ENCODE measurements at regions of chr13 and their contacts with region 1.

Region 1: DNA sequence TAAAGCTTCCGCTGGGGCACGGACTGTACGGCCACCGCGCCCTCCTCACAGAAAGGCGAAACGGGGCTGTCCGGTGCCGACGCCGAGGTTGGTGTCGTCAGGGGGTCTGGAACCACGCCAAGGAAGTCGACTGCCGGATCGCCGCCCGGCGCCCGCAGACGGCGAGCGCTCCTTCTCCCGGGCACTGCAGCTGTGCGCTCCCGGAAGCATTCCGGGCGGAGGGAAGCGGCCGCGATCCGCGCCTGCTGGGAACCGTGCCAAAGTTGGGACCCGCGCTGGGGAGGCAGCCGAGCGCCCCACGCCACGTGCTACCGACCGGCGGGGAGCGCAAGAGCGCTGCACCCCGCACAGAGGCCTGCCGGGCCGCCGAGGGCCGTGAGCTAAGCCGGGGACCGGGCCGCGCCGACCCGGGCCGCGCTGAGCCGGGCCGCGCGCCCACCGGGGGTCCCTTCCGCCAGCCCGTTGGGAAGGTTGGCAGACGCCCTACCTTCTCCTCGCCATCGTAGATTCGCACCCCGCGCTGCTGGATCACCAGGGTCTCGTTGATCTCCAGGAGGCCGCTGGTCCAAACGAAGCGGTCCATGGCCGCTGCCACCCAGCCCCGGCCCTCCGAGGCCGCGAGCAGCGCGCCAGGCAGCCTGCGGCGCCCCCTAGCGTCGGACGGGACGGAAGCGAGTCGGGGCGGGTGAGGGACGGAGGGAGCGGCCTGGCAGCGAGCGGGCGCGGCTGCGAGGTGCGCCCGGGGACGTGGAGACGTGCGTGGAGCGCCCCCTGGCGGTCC is at the start of gene VPS36:
- DNase-seq: peak; percentile 96 to 98
- ATAC-seq: peak; percentile 86 to 97 (median 92)
- H3K4me3 ChIP-seq: peak within 1 kb of the TSS; percentile 62 to 88 (median 80)
- H3K27ac ChIP-seq: peak within 1 kb of the TSS; percentile 89 to 99 (median 97)
- H3K4me1 ChIP-seq: peaks cover 0 to 44% (median 26%) of the 10 kb centered on the region in 9 donors
- H3K27me3 ChIP-seq: no peaks in the 10 kb centered on the region
- CTCF ChIP-seq: peak; percentile 99 to 100 (median 100)
- total RNA-seq, gene VPS36: 25.3 to 36.5 (median 32.7) TPM

Region 2: GRCh38 chr13:51935326-51936201 is 514.6 kb before region 1 on chr13:
- intact Hi-C with region 1: no loop called
- DNase-seq: no peak
- ATAC-seq: peak in 6 of 8 donors; percentile 27 to 57 (median 45)
- H3K4me3 ChIP-seq: no peak overlapping the region
- H3K27ac ChIP-seq: no peak overlapping the region
- H3K4me1 ChIP-seq: no peaks in the 10 kb centered on the region
- H3K27me3 ChIP-seq: no peaks in the 10 kb centered on the region
- CTCF ChIP-seq: peak in 8 of 9 donors; percentile 7 to 50 (median 40)

Region 3: DNA sequence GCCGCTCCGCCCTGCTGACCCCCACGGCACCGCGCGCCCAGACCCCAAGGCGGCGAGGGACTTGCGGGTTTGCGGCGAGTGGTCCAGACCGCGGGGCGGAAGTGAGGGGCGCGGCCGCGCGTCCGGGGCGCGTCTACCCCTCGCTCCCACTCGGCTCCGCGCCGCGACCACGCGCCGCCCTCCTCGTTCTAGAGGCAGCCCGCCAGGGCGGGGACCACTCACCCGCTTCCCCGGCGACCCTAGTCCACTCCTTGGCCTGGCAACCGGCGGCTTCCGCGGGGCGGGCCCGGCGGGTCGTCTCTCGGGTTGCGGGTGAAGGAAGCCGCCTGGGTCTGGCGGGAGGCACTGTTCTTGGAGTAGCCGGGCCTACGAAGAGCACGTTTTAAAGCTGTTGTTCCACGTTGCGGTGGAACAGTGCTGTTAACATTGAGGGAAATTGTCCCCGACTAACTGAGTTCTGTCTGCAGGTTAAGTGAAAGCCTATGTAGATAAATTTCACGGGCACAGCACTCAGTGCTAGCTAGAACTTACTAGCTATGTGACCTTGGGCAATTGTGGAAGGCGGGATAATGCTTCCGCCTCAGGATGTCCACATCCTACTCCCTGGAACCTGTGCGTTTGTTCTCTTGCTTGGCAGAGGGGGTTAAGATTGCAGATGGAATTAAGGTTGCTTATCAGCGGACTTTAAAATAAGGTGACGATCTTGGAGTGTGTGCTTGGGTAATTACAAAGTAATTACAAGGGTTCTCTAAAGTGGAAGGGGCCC is 290.7 kb before region 1 on chr13 and contains the start of gene NEK3:
- intact Hi-C with region 1: loop called in 1 of 10 experiments (anchors 10 kb)
- DNase-seq: peak; percentile 77 to 79
- ATAC-seq: peak; percentile 92 to 95 (median 94)
- H3K4me3 ChIP-seq: peak within 1 kb of the TSS; percentile 67 to 100 (median 96)
- H3K27ac ChIP-seq: peak within 1 kb of the TSS; percentile 88 to 97 (median 94)
- H3K4me1 ChIP-seq: peaks cover 3 to 63% (median 20%) of the 10 kb centered on the region in 9 donors
- H3K27me3 ChIP-seq: no peaks in the 10 kb centered on the region
- CTCF ChIP-seq: no peak
- total RNA-seq, gene NEK3: 4.5 to 7.1 (median 5.8) TPM

Region 4: DNA sequence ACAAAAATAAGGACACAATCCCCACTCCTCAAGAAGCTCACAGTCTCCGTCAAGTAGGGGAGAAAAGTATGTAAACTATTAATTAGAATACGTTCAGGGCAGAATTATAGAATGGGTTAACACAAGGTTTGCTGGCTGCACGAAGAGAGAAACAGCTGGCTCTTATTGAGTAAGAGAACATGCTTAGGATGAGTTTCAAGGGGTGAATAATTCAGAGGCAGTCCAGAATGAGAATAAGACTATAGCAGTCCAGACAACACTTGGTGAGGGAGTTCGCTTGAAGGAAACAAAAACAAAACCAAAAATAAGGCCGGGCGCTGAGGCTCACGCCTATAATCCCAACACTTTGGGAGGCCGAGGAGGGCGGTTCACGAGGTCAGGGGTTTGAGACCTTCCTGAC is 106.1 kb before region 1 on chr13:
- intact Hi-C with region 1: loop called in 8 of 10 experiments (anchors 1 to 10 kb)
- DNase-seq: no peak
- ATAC-seq: peak in 6 of 8 donors; percentile 31 to 77 (median 67)
- H3K4me3 ChIP-seq: peak overlapping the region in 5 of 10 donors; percentile 2 to 19 (median 10)
- H3K27ac ChIP-seq: peak overlapping the region in 8 of 10 donors; percentile 1 to 47 (median 36)
- H3K4me1 ChIP-seq: peaks cover 0 to 8% (median 0%) of the 10 kb centered on the region in 9 donors
- H3K27me3 ChIP-seq: no peaks in the 10 kb centered on the region
- CTCF ChIP-seq: no peak

Region 5: GRCh38 chr13:52399708-52400107 is 50.5 kb before region 1 on chr13:
- intact Hi-C with region 1: loop called in 5 of 10 experiments (anchors 1 to 5 kb)
- DNase-seq: no peak
- ATAC-seq: peak in 2 of 8 donors; percentile 41 to 56
- H3K4me3 ChIP-seq: no peak overlapping the region
- H3K27ac ChIP-seq: no peak overlapping the region
- H3K4me1 ChIP-seq: peaks cover 0 to 71% (median 22%) of the 10 kb centered on the region in 9 donors
- H3K27me3 ChIP-seq: no peaks in the 10 kb centered on the region
- CTCF ChIP-seq: peak in 6 of 9 donors; percentile 6 to 45 (median 25)

Region 6: DNA sequence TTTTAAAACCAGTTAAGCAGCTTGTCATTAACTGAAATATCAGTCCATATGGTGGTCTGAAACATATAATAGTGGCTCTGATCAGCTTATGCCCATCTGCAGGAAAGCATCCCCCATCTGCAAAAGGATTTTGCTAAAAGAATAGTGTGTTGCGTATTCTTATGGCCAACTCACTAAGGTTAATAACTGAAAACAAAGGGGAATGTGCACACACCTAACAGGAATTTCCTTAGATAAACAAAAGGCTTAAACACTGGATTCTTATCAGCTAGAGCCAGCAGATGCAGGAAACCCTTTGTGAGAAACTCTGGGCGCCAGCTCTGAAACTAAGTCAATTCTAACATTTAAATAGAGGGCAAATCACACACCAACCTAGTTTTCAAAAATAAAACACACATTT is 21.9 kb before region 1 on chr13:
- intact Hi-C with region 1: no loop called
- DNase-seq: peak in 1 of 2 donors; percentile 30
- ATAC-seq: peak; percentile 31 to 95 (median 86)
- H3K4me3 ChIP-seq: no peak overlapping the region
- H3K27ac ChIP-seq: peak overlapping the region in 6 of 10 donors; percentile 21 to 69 (median 54)
- H3K4me1 ChIP-seq: peaks cover 0 to 49% (median 15%) of the 10 kb centered on the region in 9 donors
- H3K27me3 ChIP-seq: no peaks in the 10 kb centered on the region
- CTCF ChIP-seq: no peak

Region 7: GRCh38 chr13:52652196-52652979 is 202.2 kb after region 1 on chr13 and contains the start of gene SUGT1:
- intact Hi-C with region 1: loop called in 1 of 10 experiments (anchors 10 kb)
- DNase-seq: peak; percentile 97 to 98
- ATAC-seq: peak; percentile 99 to 100 (median 100)
- H3K4me3 ChIP-seq: peak within 1 kb of the TSS; percentile 57 to 84 (median 74)
- H3K27ac ChIP-seq: peak within 1 kb of the TSS; percentile 86 to 98 (median 97)
- H3K4me1 ChIP-seq: peaks cover 0 to 49% (median 42%) of the 10 kb centered on the region in 9 donors
- H3K27me3 ChIP-seq: no peaks in the 10 kb centered on the region
- CTCF ChIP-seq: peak; percentile 36 to 78 (median 62)
- total RNA-seq, gene SUGT1: 44.3 to 61.7 (median 53.9) TPM

Region 8: DNA sequence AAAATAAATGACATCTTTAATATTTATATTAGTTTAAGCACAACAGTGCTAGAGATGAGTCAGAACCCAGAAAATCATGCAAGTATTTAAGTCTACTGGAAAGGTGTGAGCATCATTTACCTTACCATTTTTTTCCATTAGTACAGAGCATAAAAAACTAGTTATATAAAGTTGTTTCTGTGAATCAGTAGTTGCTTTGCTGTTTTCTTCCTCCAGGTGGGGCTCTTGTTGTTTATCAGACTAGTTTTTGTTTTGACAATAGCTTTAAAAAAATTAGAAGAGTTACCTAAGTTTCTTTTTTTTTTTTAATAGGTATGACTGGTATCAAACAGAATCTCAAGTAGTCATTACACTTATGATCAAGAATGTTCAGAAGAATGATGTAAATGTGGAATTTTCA is 215.1 kb after region 1 on chr13:
- intact Hi-C with region 1: no loop called
- DNase-seq: no peak
- ATAC-seq: no peak
- H3K4me3 ChIP-seq: no peak overlapping the region
- H3K27ac ChIP-seq: no peak overlapping the region
- H3K4me1 ChIP-seq: peaks cover 0 to 3% (median 0%) of the 10 kb centered on the region in 9 donors
- H3K27me3 ChIP-seq: no peaks in the 10 kb centered on the region
- CTCF ChIP-seq: peak in 8 of 9 donors; percentile 10 to 61 (median 47)